ENCODE measurements at regions of chr20 and their contacts with region 1.

Region 1: DNA sequence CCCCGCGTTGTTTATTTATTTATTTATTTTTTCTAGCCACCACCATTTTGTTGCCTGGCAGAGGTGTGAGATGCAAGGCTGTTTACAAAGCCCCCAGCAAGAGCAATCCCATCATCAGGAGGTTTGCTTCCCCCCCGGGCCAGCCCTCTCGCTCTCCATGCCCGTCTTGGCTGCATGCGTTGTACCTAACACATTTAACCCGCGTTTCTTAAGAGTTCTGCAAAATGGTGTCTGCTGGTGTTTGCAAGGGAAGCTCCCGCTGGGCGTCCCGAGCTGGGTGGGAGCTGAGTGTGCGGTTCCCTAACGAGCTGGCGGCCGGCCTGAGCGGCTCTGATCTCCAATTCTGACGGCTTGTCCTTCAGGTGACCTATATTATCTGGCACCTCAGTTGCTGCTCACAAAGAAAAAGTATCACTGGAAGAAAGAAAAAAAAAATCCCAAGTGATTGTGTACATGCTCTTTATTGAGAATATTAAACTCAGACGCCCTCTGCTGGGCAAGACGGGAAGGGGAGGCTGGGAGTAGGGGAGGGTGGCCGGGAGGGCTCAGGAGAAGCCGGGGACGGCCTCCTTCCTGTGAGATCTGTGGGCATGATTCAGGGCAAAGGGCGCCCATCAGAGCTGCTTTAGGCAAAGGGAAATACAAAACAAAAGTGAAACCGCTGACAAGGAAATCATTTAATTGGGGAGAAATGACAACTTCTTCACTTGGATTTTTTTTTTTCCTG is 154.8 kb downstream of the BCAS1 start:
- DNase-seq: peak; percentile 95 to 98
- H3K4me3 ChIP-seq: peak overlapping the region; percentile 61
- H3K27ac ChIP-seq: peak overlapping the region; percentile 93
- H3K4me1 ChIP-seq: peaks cover 47% of the 10 kb centered on the region
- H3K27me3 ChIP-seq: no peaks in the 10 kb centered on the region
- CTCF ChIP-seq: peak; percentile 97

Region 2: GRCh38 chr20:53547664-53548239 is 367.9 kb before region 1 on chr20:
- CTCF ChIA-PET with region 1: no interaction called
- POLR2A ChIA-PET with region 1: interaction called, 12 read pairs
- intact Hi-C with region 1: no loop called
- DNase-seq: peak; percentile 12 to 51
- H3K4me3 ChIP-seq: no peak overlapping the region
- H3K27ac ChIP-seq: no peak overlapping the region
- H3K4me1 ChIP-seq: no peaks in the 10 kb centered on the region
- H3K27me3 ChIP-seq: no peaks in the 10 kb centered on the region
- CTCF ChIP-seq: peak; percentile 84

Region 3: DNA sequence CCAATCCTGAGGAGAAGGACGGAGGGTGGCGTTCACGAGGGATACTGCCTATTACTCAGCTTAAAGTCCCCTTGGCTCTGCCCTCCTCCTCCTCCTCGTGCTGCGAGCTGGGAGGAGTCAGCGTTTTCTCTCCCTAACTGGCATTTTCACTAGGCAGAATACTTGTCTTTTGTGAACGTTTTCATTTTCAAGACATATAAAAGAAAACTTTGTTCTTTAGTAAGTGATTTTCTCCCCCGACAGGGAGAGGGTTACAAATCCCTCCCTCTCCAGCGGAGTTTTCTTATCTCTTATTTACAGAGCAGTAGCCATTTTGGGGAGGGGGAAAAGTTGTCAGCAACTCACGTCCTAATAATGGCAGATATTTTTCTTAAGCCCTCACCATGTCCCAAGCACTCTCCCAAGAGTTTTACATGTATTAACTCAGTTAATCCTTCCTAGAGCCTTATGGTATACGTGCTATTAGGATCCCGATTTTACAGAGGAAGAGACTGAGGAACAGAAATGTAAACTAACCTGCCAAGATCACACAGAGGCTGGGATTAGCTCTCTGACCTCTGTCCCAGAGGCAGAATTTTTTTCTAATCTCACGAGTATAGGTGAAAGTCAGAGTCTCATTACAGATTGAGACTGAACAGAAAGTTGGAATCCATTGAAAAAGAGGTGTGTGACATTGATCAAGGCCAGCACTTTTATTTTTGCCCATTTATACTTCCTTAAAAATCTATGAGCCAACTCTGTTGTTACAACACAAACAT is 292.0 kb before region 1 on chr20:
- CTCF ChIA-PET with region 1: interaction called, 3 read pairs
- POLR2A ChIA-PET with region 1: no interaction called
- intact Hi-C with region 1: loop called (anchors 1 kb)
- DNase-seq: peak; percentile 62 to 69
- H3K4me3 ChIP-seq: peak overlapping the region; percentile 58
- H3K27ac ChIP-seq: peak overlapping the region; percentile 98
- H3K4me1 ChIP-seq: peaks cover 57% of the 10 kb centered on the region
- H3K27me3 ChIP-seq: no peaks in the 10 kb centered on the region
- CTCF ChIP-seq: no peak

Region 4: DNA sequence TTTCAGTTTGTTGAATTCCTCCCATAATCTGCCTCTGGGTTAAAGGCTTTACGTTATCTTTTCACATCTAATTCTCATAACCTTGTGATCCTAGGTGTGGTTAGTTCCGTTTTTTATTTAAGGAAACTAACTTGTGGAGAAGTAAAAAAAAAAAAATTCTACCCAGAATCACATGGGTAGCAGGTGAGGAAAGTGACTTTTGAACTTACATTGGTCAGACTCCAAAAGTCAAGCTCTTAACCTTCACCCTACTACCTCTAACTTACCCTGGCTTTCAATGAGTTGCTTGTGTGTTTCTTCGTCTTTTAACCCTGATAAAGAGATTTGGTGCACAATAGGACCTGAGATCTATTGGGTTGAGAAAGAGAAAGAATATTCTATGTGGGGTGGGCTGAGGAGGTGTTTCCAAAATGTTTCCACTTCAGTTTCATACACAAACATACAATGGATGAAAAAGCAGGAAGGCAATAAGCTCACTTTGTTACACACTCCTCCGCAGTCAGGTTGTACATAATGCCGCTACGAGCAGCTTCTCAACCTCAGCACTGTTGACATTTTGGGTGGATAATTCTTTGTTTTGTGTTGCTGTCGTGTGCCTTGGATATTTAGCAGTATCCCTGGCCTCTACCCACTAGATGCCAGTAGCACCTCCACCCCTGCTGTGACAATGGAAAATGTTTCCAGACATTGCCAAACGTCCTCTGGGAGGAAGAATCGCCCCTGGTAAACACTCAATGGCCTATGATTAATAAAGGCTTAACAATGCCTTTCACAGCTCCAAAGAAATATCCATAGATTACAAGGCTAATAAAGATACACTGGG is 129.0 kb before region 1 on chr20:
- CTCF ChIA-PET with region 1: no interaction called
- POLR2A ChIA-PET with region 1: no interaction called
- intact Hi-C with region 1: loop called (anchors 1 kb)
- DNase-seq: peak; percentile 44 to 97
- H3K4me3 ChIP-seq: peak overlapping the region; percentile 40; the same call in 1 of the 2 replicates
- H3K27ac ChIP-seq: peak overlapping the region; percentile 98
- H3K4me1 ChIP-seq: peaks cover 68% of the 10 kb centered on the region
- H3K27me3 ChIP-seq: no peaks in the 10 kb centered on the region
- CTCF ChIP-seq: no peak; the same call in 1 of the 2 replicates

Region 5: GRCh38 chr20:53939572-53940359 is 24.2 kb after region 1 on chr20:
- CTCF ChIA-PET with region 1: interaction called, 11 read pairs
- POLR2A ChIA-PET with region 1: interaction called, 4 read pairs
- intact Hi-C with region 1: loop called (anchors 1 kb)
- DNase-seq: peak; percentile 89 to 90
- H3K4me3 ChIP-seq: no peak overlapping the region
- H3K27ac ChIP-seq: peak overlapping the region; percentile 65
- H3K4me1 ChIP-seq: peaks cover 26% of the 10 kb centered on the region
- H3K27me3 ChIP-seq: no peaks in the 10 kb centered on the region
- CTCF ChIP-seq: peak; percentile 96

Region 6: GRCh38 chr20:54320115-54320607 is 404.6 kb after region 1 on chr20:
- CTCF ChIA-PET with region 1: no interaction called
- POLR2A ChIA-PET with region 1: no interaction called
- intact Hi-C with region 1: no loop called
- DNase-seq: no peak
- H3K4me3 ChIP-seq: no peak overlapping the region
- H3K27ac ChIP-seq: no peak overlapping the region
- H3K4me1 ChIP-seq: no peaks in the 10 kb centered on the region
- H3K27me3 ChIP-seq: no peaks in the 10 kb centered on the region
- CTCF ChIP-seq: no peak

Measured in PC-9 (cell line).